RWPE1 (cell line): ENCODE measurements at regions of chr2 and their contacts with region 1.

Region 1: DNA sequence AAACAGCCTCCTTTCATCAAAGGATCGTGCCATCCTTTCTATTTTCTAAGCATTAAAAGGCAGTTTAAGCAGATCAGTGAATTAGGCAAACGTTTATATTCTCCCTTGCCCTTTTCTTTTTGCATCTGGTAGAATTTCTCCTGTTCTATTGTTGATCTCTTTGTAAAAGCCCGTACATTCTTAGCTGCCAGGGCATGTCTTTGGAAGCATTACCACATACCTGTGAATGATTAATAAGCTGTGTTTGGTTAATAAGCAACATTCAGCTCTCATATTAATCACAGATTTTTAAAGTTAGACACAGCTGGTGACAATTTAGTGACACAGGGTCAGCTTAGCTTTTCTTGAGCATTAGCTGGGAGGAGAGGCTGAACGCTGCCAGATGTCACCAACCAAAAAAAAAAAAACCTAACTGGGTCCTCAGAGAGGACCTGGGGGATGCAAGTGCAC is 33.8 kb upstream of the CYP1B1 start:
- DNase-seq: peak; percentile 60
- H3K27ac ChIP-seq: peak overlapping the region; percentile 94
- CTCF ChIP-seq: no peak

Region 2: DNA sequence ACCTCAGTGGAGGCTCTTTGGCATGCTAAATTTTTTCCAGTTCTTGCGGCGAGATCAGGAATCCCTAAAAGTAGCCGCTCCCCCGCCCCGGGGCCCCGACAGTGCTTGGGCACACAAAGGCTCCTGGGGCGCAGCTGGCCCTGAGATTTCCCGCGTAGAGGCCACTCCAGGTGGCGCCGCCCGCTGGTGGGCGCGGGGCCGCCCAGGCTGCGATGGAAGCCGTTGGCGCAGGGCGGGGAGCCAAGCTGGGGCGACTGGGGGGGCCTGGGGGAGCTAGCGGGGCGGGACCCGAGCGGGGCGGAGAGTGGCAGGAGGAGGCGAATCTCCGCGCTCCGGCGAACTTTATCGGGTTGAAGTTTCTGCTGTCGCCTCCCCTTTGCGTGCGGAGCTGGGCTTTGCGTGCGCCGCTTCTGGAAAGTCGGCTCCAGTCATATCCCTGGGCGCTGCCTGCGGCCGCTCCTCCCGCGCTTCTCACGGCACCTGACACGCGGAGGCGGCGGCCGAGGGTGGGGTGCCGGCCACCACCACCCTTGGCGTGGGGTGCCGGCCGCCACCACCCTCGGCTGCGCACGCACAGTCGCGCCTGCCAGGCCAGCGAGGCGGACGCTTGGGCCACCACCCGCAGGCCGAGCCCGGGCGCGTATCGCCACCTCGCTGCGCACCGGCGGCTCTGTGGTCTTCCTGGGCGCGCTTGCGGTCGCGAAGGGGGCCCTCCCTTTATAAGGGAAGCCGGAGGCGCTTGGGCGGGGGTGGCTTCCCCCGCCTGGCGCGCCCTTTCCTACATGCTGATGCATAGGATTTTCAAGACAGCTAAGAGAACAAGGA is 32.9 kb before region 1 on chr2:
- CTCF ChIA-PET with region 1: interaction called, 11 read pairs
- POLR2A ChIA-PET with region 1: interaction called, 4 read pairs
- DNase-seq: peak; percentile 60
- H3K27ac ChIP-seq: peak overlapping the region; percentile 98
- CTCF ChIP-seq: peak; percentile 78

Region 3: DNA sequence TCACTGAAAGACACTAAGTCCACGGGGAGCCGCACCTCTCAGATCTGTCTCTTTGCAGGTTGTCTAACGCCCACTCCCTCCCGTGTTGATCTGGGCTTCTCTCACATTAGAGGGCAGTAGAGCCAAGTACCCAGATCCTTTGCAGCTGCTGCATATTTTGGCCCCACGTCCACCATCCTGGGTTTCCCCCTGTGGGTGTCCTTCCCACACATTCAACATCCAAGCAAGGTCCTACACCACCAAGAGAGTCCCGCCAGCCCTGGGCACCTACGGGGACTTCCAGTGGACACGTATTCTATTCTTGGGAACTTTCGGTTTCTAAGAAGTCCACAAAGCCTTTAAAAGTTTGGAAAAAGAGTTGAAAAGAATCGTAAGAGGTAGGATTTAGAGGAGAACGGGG is 150.7 kb after region 1 on chr2:
- CTCF ChIA-PET with region 1: no interaction called
- POLR2A ChIA-PET with region 1: interaction called, 10 read pairs
- DNase-seq: no peak
- H3K27ac ChIP-seq: no peak overlapping the region
- CTCF ChIP-seq: no peak